CD4-positive, alpha-beta T cell (primary cell): ENCODE measurements at regions of chr19 and their contacts with region 1.

Region 1: DNA sequence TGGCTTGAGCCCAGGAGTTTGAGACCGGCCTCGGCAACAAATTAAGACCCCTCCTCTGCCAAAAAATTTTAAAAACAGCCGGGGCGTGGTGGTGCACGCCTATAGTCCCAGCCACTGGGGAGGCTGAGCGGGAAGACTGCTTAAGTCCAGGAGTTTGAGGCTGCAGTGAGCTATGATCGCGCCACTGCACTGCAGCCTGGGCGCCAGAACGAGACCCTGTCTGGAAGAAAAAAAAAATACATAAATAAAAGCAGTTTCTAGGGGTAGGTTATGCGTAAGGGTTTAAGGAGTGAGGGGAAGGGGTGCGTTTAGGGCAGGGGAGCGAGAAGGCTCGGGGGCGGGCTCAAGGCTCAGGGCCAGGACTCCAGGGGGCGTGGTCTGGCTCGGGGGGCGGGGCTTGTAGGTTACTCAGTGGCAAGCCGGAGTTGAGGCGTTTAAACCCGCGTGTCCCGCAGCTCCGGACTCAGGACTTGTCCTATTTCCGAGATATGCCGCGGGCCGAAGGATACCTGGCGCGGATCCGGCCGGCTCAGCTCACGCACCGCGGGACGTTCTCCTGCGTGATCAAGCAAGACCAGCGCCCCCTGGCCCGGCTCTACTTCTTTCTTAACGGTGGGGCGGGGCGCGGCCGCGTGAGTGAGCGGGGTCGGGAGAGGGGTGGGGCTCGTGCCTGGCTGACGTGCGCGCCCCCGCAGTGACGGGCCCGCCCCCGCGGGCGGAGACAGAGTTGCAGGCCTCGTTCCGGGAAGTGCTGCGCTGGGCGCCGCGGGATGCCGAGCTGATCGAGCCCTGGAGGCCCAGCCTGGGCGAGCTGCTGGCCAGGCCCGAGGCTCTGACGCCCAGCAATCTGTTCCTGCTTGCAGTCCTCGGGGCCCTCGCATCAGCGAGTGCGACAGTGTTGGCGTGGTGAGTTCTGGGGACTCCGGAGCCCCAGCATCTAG is 10.7 kb downstream of the SPACA6 start:
- DNase-seq: peak; percentile 93 to 99 (median 97)
- ATAC-seq: peak; percentile 89
- H3K4me3 ChIP-seq: peak overlapping the region; percentile 91
- H3K4me3 Mint-ChIP-seq: peak overlapping the region; percentile 93
- H3K27ac ChIP-seq: peak overlapping the region; percentile 66 to 82
- H3K27ac Mint-ChIP-seq: peak overlapping the region; percentile 84
- H3K4me1 ChIP-seq: peaks cover 34% of the 10 kb centered on the region
- H3K4me1 Mint-ChIP-seq: peaks cover 46% of the 10 kb centered on the region
- H3K27me3 ChIP-seq: no peaks in the 10 kb centered on the region
- H3K27me3 Mint-ChIP-seq: no peaks in the 10 kb centered on the region
- CTCF ChIP-seq: peak; percentile 55

Region 2: GRCh38 chr19:51441410-51442390 is 262.1 kb before region 1 on chr19:
- CTCF ChIA-PET with region 1: no interaction called
- POLR2A ChIA-PET with region 1: no interaction called
- intact Hi-C with region 1: loop called in 1 of 2 experiments (anchors 5 kb)
- DNase-seq: peak; percentile 50 to 92 (median 70)
- ATAC-seq: peak; percentile 90
- H3K4me3 ChIP-seq: peak overlapping the region; percentile 44
- H3K4me3 Mint-ChIP-seq: peak overlapping the region; percentile 78
- H3K27ac ChIP-seq: peak overlapping the region; percentile 49 to 68
- H3K27ac Mint-ChIP-seq: peak overlapping the region; percentile 45
- H3K4me1 ChIP-seq: peaks cover 29% of the 10 kb centered on the region
- H3K4me1 Mint-ChIP-seq: peaks cover 38% of the 10 kb centered on the region
- H3K27me3 ChIP-seq: peaks cover 0 to 2% of the 10 kb centered on the region in 2 experiments
- H3K27me3 Mint-ChIP-seq: peaks cover 4% of the 10 kb centered on the region
- CTCF ChIP-seq: no peak

Region 3: DNA sequence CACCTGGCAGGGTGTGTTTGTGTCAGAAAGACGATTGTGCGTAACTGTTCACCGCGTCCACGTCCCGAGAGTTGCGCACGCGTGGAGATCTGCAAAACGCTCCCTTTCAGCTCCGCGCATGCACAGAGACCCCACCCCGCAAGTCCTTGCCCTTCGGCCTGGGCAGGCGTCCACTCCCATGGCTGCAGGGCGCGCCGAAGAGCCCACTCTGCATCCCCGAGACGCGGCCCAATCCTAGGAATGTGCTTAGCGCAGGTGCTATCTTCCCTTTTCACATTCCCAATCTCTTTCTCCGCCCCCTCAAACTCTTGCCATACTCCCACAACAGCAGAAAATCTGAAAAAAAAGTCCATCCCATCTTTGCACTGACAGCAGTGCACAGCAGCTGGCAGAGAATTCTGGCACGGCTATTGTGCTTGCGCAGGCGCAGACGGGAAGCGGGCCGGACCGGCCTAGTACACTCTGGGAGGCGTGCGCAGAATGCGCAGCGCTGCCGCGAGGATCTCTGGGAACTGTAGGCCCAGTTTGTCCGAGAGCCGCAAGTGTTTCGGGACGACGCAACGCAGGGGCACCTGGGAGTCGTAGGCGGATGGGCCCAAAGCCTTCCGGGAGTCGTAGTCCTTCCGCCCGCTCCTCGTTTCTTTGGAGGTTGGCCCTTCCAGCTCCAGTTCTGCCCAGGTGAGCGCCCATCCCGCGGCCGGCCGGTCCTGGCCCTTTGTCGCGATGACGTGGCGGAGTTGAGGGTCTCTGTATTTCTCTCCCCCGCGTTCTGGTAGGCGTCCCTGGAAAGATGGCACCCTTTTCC is 109.7 kb before region 1 on chr19:
- CTCF ChIA-PET with region 1: no interaction called
- POLR2A ChIA-PET with region 1: interaction called, 4 read pairs
- intact Hi-C with region 1: loop called in 1 of 2 experiments (anchors 1 kb)
- DNase-seq: peak; percentile 88 to 99 (median 95)
- ATAC-seq: peak; percentile 100
- H3K4me3 ChIP-seq: peak overlapping the region; percentile 80
- H3K4me3 Mint-ChIP-seq: peak overlapping the region; percentile 94
- H3K27ac ChIP-seq: peak overlapping the region in 1 of 2 donors; percentile 42
- H3K27ac Mint-ChIP-seq: peak overlapping the region; percentile 71
- H3K4me1 ChIP-seq: peaks cover 21% of the 10 kb centered on the region
- H3K4me1 Mint-ChIP-seq: peaks cover 29% of the 10 kb centered on the region
- H3K27me3 ChIP-seq: peaks cover 7 to 8% of the 10 kb centered on the region in 2 experiments
- H3K27me3 Mint-ChIP-seq: peaks cover 31% of the 10 kb centered on the region
- CTCF ChIP-seq: no peak

Region 4: GRCh38 chr19:51735759-51736449 is 32.1 kb after region 1 on chr19:
- CTCF ChIA-PET with region 1: no interaction called
- POLR2A ChIA-PET with region 1: no interaction called
- intact Hi-C with region 1: no loop called
- DNase-seq: peak in 3 of 14 experiments; percentile 12 to 77 (median 69)
- ATAC-seq: no peak
- H3K4me3 ChIP-seq: no peak overlapping the region
- H3K4me3 Mint-ChIP-seq: no peak overlapping the region
- H3K27ac ChIP-seq: no peak overlapping the region
- H3K27ac Mint-ChIP-seq: no peak overlapping the region
- H3K4me1 ChIP-seq: no peaks in the 10 kb centered on the region
- H3K4me1 Mint-ChIP-seq: no peaks in the 10 kb centered on the region
- H3K27me3 ChIP-seq: peaks cover 4 to 15% of the 10 kb centered on the region in 2 experiments
- H3K27me3 Mint-ChIP-seq: peaks cover 53% of the 10 kb centered on the region
- CTCF ChIP-seq: no peak

Region 5: GRCh38 chr19:51926784-51927742 is 223.2 kb after region 1 on chr19 and contains the start of gene ZNF613:
- CTCF ChIA-PET with region 1: no interaction called
- POLR2A ChIA-PET with region 1: no interaction called
- intact Hi-C with region 1: loop called in 1 of 2 experiments (anchors 10 kb)
- DNase-seq: peak; percentile 72 to 93 (median 79)
- ATAC-seq: peak; percentile 88
- H3K4me3 ChIP-seq: peak within 1 kb of the TSS; percentile 78
- H3K4me3 Mint-ChIP-seq: peak within 1 kb of the TSS; percentile 97
- H3K27ac ChIP-seq: peak within 1 kb of the TSS; percentile 55 to 60
- H3K27ac Mint-ChIP-seq: peak within 1 kb of the TSS; percentile 86
- H3K4me1 ChIP-seq: peaks cover 17% of the 10 kb centered on the region
- H3K4me1 Mint-ChIP-seq: peaks cover 36% of the 10 kb centered on the region
- H3K27me3 ChIP-seq: no peaks in the 10 kb centered on the region
- H3K27me3 Mint-ChIP-seq: no peaks in the 10 kb centered on the region
- CTCF ChIP-seq: peak; percentile 22
- total RNA-seq, gene ZNF613: 0.67 to 1.3 TPM